Aorta (tissue), 5 donors: ENCODE measurements at regions of chr18 and their contacts with region 1.

Region 1: DNA sequence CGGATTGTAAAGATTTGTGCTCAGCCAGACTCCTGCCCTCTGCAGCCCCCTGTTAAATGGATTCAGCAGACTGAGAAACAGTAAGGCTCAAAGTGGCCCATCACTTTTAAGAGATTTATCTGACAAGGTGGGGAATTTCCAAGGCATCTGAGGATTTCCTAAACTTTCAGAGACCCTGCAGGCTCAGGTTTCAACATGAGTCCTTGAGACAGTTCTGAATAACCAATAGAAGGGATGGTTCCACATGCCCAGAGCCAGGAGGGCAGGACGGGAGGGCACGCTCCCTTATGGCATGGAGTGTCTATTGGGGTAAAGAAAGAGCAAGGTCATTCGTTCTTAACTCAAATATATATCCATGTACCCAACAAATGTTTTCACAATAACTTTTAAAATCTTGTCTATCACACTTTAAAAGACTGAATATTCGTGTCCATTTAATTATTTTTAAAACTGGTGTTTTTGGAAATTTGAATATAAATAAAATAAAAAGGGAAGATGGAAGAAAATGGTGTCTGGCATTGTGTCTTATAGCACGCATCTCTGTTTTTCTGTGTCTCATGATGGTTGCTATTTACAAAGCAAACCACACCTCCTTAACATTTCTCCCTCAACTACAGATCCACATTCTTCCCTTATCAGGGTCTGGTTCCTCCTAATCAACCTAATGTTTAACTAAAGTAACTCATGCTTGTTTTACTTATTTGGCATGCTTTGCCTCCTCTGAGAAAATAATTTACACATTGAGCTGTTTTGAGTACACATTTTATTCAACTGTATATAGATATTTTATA is 56.0 kb upstream of the DSG1 start:
- DNase-seq: no peak
- ATAC-seq: no peak
- H3K4me3 ChIP-seq: no peak overlapping the region
- H3K27ac ChIP-seq: no peak overlapping the region
- H3K4me1 ChIP-seq: no peaks in the 10 kb centered on the region
- H3K27me3 ChIP-seq: no peaks in the 10 kb centered on the region

Region 2: DNA sequence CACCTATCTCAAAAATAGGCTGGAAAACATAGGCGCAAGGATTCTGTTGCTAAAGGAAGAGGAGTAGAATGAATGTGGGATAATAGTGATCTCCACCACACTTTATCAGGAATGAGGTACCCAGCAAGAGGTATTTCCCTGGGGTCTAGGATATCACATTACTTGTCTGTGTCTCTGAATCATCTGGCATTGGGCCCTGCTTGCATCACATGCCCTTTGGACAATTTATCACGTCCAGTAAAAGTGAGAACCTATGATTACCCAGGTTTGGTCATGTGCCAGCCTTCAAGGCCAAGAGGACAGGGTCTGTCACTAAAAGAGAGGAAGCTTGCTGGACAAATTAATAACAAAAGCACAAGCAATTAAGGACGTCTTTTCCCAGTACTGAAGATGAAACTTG is 692.4 kb after region 1 on chr18:
- intact Hi-C with region 1: loop called in 1 of 2 experiments (anchors 5 kb)
- DNase-seq: no peak
- ATAC-seq: no peak
- H3K4me3 ChIP-seq: no peak overlapping the region
- H3K27ac ChIP-seq: no peak overlapping the region
- H3K4me1 ChIP-seq: no peaks in the 10 kb centered on the region
- H3K27me3 ChIP-seq: no peaks in the 10 kb centered on the region